CD8-positive, alpha-beta memory T cell (primary cell): ENCODE measurements at regions of chr1 and their contacts with region 1.

Region 1: GRCh38 chr1:62175568-62176179 is 19.0 kb upstream of the L1TD1 start:
- DNase-seq: peak in 2 of 5 donors; percentile 13 to 37
- H3K4me3 ChIP-seq: no peak overlapping the region
- H3K4me3 Mint-ChIP-seq: no peak overlapping the region
- H3K27ac ChIP-seq: no peak overlapping the region
- H3K27ac Mint-ChIP-seq: no peak overlapping the region
- H3K4me1 ChIP-seq: no peaks in the 10 kb centered on the region
- H3K4me1 Mint-ChIP-seq: no peaks in the 10 kb centered on the region
- H3K27me3 ChIP-seq: no peaks in the 10 kb centered on the region
- H3K27me3 Mint-ChIP-seq: peaks cover 5 to 12% of the 10 kb centered on the region in 2 donors

Region 2: GRCh38 chr1:62407405-62408009 is 231.8 kb after region 1 on chr1:
- CTCF ChIA-PET with region 1: interaction called, 18 read pairs
- POLR2A ChIA-PET with region 1: no interaction called
- DNase-seq: peak in 2 of 5 donors; percentile 16 to 41
- H3K4me3 ChIP-seq: no peak overlapping the region
- H3K4me3 Mint-ChIP-seq: no peak overlapping the region
- H3K27ac ChIP-seq: no peak overlapping the region
- H3K27ac Mint-ChIP-seq: no peak overlapping the region
- H3K4me1 ChIP-seq: no peaks in the 10 kb centered on the region
- H3K4me1 Mint-ChIP-seq: no peaks in the 10 kb centered on the region
- H3K27me3 ChIP-seq: no peaks in the 10 kb centered on the region
- H3K27me3 Mint-ChIP-seq: peaks cover 6 to 8% of the 10 kb centered on the region in 2 donors

Region 3: GRCh38 chr1:62746085-62746808 is 570.6 kb after region 1 on chr1:
- CTCF ChIA-PET with region 1: interaction called, 25 read pairs
- POLR2A ChIA-PET with region 1: no interaction called
- DNase-seq: peak in 2 of 5 donors; percentile 10 to 27
- H3K4me3 ChIP-seq: no peak overlapping the region
- H3K4me3 Mint-ChIP-seq: no peak overlapping the region
- H3K27ac ChIP-seq: no peak overlapping the region
- H3K27ac Mint-ChIP-seq: no peak overlapping the region
- H3K4me1 ChIP-seq: no peaks in the 10 kb centered on the region
- H3K4me1 Mint-ChIP-seq: no peaks in the 10 kb centered on the region
- H3K27me3 ChIP-seq: no peaks in the 10 kb centered on the region
- H3K27me3 Mint-ChIP-seq: peaks cover 3 to 11% of the 10 kb centered on the region in 2 donors